GM10248 (cell line): ENCODE measurements at regions of chr6 and their contacts with region 1.

Region 1: GRCh38 chr6:142871910-142872331 is 73.1 kb downstream of the HIVEP2 start:
- DNase-seq: peak; percentile 38
- CTCF ChIP-seq: no peak

Region 2: GRCh38 chr6:142722012-142722411 is 149.9 kb before region 1 on chr6:
- CTCF ChIA-PET with region 1: no interaction called
- POLR2A ChIA-PET with region 1: no interaction called
- DNase-seq: no peak
- CTCF ChIP-seq: no peak

Region 3: GRCh38 chr6:142885182-142885867 is 13.4 kb after region 1 on chr6:
- CTCF ChIA-PET with region 1: interaction called, 69 read pairs
- POLR2A ChIA-PET with region 1: interaction called, 3 read pairs
- DNase-seq: peak; percentile 35
- CTCF ChIP-seq: no peak